ENCODE measurements at regions of chr9 and their contacts with region 1.

Region 1: DNA sequence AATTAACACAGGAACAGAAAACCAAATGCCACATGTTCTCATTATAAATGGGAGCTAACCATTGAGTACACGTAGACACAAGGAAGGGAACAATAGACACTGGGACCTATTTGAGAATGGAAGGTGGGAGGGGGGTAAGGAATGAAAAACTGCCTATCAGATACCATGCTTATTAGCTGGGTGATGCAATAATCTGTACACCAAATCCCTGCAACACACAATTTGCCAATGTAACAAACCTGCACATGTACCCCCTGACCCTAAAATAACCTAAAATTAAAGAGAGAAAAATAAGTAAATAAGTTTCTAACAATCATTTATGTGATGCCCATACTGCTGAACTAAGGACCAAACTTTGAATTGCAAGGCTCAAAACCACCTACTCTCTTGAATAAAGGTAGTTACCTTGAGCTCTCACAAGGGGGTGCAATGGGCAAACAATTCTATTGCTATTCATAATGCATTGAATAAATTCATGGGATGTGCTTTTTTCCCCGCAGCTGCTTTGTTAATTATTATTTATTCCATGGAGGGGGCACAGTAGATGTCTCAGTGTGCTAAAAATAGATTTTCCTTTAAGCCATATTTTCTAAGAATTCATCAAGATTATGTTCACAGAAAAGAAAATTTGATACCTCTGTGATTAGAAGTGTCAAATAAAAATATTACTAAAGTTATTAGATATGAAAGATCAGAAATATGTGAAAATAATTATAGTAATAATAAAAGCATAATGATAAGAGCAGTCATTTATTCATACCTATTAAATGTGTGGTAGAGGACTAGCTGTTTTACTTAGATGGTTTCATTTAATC is 76.2 kb upstream of the PTPN3 start:
- DNase-seq: no peak
- ATAC-seq: peak; percentile 77
- H3K4me3 ChIP-seq: no peak overlapping the region
- H3K27ac ChIP-seq: no peak overlapping the region
- H3K4me1 ChIP-seq: no peaks in the 10 kb centered on the region
- H3K27me3 ChIP-seq: no peaks in the 10 kb centered on the region
- CTCF ChIP-seq: peak; percentile 62

Region 2: GRCh38 chr9:108963459-108964143 is 610.7 kb before region 1 on chr9:
- intact Hi-C with region 1: no loop called
- DNase-seq: no peak
- ATAC-seq: no peak
- H3K4me3 ChIP-seq: no peak overlapping the region
- H3K27ac ChIP-seq: no peak overlapping the region
- H3K4me1 ChIP-seq: no peaks in the 10 kb centered on the region
- H3K27me3 ChIP-seq: no peaks in the 10 kb centered on the region
- CTCF ChIP-seq: no peak

Region 3: GRCh38 chr9:109817846-109818472 is 243.7 kb after region 1 on chr9:
- intact Hi-C with region 1: loop called (anchors 10 kb)
- DNase-seq: no peak
- ATAC-seq: peak; percentile 91
- H3K4me3 ChIP-seq: no peak overlapping the region
- H3K27ac ChIP-seq: no peak overlapping the region
- H3K4me1 ChIP-seq: no peaks in the 10 kb centered on the region
- H3K27me3 ChIP-seq: no peaks in the 10 kb centered on the region
- CTCF ChIP-seq: peak; percentile 84

Measured in upper lobe of right lung (tissue), 1 donor.